PC-3 (cell line): ENCODE measurements at regions of chr2 and their contacts with region 1.

Region 1: GRCh38 chr2:7363906-7364305 is 446.7 kb downstream of the RNF144A start:
- DNase-seq: peak; percentile 27
- ATAC-seq: no peak; the same call in 1 of the 2 replicates
- H3K4me3 ChIP-seq: no peak overlapping the region
- H3K27ac ChIP-seq: no peak overlapping the region
- H3K4me1 ChIP-seq: no peaks in the 10 kb centered on the region
- H3K27me3 ChIP-seq: no peaks in the 10 kb centered on the region
- CTCF ChIP-seq: peak; percentile 31; the same call in 1 of the 2 replicates

Region 2: DNA sequence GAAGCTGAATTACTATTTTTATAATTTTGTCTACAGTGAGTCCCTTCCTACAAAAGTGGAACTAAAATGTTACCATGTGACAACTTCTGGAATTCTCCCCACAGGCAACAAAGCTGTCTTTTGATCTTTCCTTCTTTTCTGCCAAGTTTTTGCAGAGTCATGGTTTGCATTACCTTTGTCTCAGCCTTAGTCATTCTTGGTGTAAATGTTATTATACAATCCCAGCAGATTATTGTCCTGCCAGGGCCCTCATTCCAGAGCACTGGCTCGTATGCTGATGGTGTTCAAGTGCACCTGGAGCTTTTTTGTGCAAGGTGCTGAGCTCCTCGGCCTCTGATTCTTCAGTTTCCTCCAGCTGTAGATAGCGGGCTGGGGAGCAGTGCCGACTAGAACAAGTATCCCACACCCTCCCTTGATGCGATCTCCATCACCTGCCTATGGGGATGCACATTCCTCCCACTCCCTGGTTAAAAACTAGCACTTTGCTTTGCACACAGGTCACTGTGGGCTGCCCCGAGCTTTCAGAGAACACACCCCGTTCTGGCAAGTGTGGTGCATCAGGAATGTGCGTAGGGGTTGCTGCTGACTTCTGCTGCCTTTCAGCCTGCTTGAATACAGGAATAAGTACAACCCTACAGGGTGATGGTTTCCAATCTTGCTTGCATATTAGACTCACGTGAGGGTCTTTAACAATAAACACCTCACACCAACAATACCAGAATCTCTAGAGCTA is 183.1 kb before region 1 on chr2:
- CTCF ChIA-PET with region 1: no interaction called
- POLR2A ChIA-PET with region 1: interaction called, 13 read pairs
- intact Hi-C with region 1: no loop called
- DNase-seq: peak; percentile 95
- ATAC-seq: peak; percentile 99
- H3K4me3 ChIP-seq: peak overlapping the region; percentile 47; the same call in 1 of the 2 replicates
- H3K27ac ChIP-seq: peak overlapping the region; percentile 61
- H3K4me1 ChIP-seq: peaks cover 15% of the 10 kb centered on the region
- H3K27me3 ChIP-seq: no peaks in the 10 kb centered on the region
- CTCF ChIP-seq: no peak